Breast epithelium (tissue), 4 donors: ENCODE measurements at regions of chr11 and their contacts with region 1.

Region 1: DNA sequence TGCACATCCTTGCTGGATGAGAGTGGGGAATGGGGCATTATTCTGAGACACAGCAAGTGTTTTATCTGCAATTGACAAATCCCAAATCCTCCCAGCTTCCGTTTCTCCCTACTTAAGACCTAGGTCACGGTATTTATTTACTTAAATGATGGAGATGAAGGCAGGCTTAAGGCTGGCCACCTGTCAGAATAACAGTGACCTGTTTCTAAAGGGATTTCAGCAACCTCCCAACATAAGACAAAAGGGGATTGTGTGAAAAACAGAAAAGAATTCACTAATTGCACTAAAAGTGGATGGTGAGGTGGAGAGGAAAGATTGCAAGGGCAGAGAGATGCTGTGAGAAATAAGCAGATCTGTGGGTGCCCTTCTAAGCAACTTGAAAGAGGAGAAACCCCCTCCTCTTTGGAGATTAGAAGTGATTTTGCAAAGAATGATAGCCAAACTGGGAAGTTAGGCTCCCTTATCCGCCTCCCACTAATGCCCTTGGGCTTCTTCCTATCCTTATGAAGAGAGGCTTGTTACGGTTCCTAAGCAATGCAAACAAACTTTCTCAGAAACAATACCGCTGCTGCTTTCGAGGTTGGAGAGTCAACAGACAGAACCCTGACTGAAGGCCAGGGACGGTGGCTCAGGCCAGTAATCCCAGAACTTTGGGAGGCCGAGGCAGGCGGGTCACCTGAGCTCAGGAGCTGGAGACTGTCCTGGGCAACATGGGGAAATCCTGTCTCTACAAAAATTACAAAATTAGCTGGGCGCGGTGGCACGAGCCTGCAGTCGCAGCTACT is 84.3 kb downstream of the ARL14EP start:
- DNase-seq: no peak
- H3K4me3 ChIP-seq: no peak overlapping the region
- H3K27ac ChIP-seq: no peak overlapping the region
- H3K4me1 ChIP-seq: no peaks in the 10 kb centered on the region
- H3K27me3 ChIP-seq: no peaks in the 10 kb centered on the region
- CTCF ChIP-seq: no peak
- POLR2A ChIP-seq: no peak

Region 2: GRCh38 chr11:30431127-30431814 is 24.1 kb after region 1 on chr11:
- intact Hi-C with region 1: loop called (anchors 2 kb)
- DNase-seq: no peak
- H3K4me3 ChIP-seq: no peak overlapping the region
- H3K27ac ChIP-seq: no peak overlapping the region
- H3K4me1 ChIP-seq: no peaks in the 10 kb centered on the region
- H3K27me3 ChIP-seq: no peaks in the 10 kb centered on the region
- CTCF ChIP-seq: no peak
- POLR2A ChIP-seq: no peak